IMR-90 (cell line): ENCODE measurements at regions of chr1 and their contacts with region 1.

Region 1: GRCh38 chr1:55284852-55285251 is 69.7 kb upstream of the USP24 start:
- DNase-seq: peak; percentile 60
- ATAC-seq: peak; percentile 84
- H3K4me3 ChIP-seq: no peak overlapping the region
- H3K27ac ChIP-seq: no peak overlapping the region
- H3K4me1 ChIP-seq: peaks cover 3% of the 10 kb centered on the region; the same call in 1 of the 2 replicates
- H3K27me3 ChIP-seq: no peaks in the 10 kb centered on the region
- CTCF ChIP-seq: peak; percentile 78
- POLR2A ChIP-seq: no peak
- RAD21 ChIP-seq: peak; percentile 85

Region 2: DNA sequence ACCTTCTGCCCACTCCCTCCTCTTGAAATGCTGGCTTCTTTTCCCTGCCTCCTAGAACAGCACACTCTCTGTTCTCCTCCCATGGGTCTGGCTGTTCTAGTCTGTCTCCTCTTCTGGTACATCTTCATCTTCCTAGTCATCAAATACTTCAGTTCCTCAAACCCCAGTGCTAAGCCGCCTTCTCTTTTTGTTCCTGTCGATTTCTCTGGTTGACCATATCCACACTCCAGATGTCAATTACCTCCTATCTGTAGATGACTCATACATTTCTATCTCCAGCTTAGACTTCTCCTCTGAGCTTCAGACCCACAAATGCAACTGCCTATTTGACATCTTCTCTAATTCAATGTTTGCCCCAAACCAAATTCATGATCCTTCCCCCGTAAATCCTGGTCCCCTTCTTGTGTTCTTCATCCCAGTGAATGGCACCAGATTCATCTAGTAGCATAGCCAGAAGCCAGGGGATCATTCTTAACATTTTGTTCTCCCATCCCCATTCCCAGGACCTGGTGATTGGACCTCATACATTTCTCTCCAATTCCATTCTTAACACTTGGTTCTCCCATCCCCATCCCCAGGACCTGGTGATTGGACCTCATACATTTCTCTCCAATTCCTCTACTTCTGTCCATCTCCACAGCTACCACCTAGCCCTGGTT is 105.5 kb before region 1 on chr1:
- CTCF ChIA-PET with region 1: no interaction called
- POLR2A ChIA-PET with region 1: no interaction called
- dilution Hi-C with region 1: no loop called
- in situ Hi-C with region 1: no loop called
- intact Hi-C with region 1: no loop called
- DNase-seq: peak; percentile 13
- ATAC-seq: no peak
- H3K4me3 ChIP-seq: no peak overlapping the region
- H3K27ac ChIP-seq: no peak overlapping the region
- H3K4me1 ChIP-seq: no peaks in the 10 kb centered on the region
- H3K27me3 ChIP-seq: no peaks in the 10 kb centered on the region
- CTCF ChIP-seq: no peak
- POLR2A ChIP-seq: no peak
- RAD21 ChIP-seq: no peak

Region 3: DNA sequence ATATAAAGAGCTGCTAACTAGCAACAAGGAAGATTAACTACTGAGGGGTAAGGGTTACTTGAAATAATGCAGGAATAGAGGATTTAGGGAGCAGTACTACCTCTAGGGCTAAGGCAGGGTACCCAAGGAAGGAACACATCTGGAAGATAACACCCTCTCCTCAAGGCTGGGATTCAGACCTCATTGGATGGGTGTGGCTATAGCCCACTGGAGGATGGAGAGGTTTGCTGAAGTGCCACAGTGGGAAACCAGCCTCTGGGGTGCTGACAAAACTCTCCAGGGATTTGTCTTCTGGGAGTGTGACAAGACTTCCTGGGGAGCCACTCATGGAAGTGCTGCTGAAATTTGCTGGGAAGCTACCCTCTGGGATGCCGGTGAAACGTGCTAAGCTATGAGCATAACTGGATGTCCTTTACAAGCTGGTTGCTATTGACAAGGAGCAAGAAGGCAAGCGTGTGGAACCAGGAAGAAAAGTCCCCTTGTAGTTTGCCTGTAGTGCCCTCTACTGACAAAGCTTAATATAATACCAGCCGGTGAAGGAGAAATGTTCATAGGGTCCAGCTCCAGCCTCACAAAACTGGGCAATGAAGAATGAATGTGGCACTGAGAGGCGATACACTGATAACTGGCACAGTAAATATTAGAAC is 53.1 kb after region 1 on chr1:
- CTCF ChIA-PET with region 1: interaction called, 19 read pairs
- POLR2A ChIA-PET with region 1: no interaction called
- dilution Hi-C with region 1: no loop called
- in situ Hi-C with region 1: no loop called
- intact Hi-C with region 1: loop called (anchors 1 kb)
- DNase-seq: peak; percentile 79
- ATAC-seq: peak; percentile 96
- H3K4me3 ChIP-seq: no peak overlapping the region
- H3K27ac ChIP-seq: no peak overlapping the region
- H3K4me1 ChIP-seq: no peaks in the 10 kb centered on the region
- H3K27me3 ChIP-seq: no peaks in the 10 kb centered on the region
- CTCF ChIP-seq: peak; percentile 77
- POLR2A ChIP-seq: no peak
- RAD21 ChIP-seq: peak; percentile 88

Region 4: GRCh38 chr1:55506686-55507577 is 222.1 kb after region 1 on chr1:
- CTCF ChIA-PET with region 1: no interaction called
- POLR2A ChIA-PET with region 1: no interaction called
- dilution Hi-C with region 1: no loop called
- in situ Hi-C with region 1: no loop called
- intact Hi-C with region 1: loop called (anchors 2 kb)
- DNase-seq: peak; percentile 63
- ATAC-seq: peak; percentile 51
- H3K4me3 ChIP-seq: no peak overlapping the region
- H3K27ac ChIP-seq: peak overlapping the region; percentile 89
- H3K4me1 ChIP-seq: peaks cover 30% of the 10 kb centered on the region
- H3K27me3 ChIP-seq: no peaks in the 10 kb centered on the region
- CTCF ChIP-seq: peak; percentile 31; the same call in 1 of the 2 replicates
- POLR2A ChIP-seq: no peak
- RAD21 ChIP-seq: peak; percentile 37

Region 5: DNA sequence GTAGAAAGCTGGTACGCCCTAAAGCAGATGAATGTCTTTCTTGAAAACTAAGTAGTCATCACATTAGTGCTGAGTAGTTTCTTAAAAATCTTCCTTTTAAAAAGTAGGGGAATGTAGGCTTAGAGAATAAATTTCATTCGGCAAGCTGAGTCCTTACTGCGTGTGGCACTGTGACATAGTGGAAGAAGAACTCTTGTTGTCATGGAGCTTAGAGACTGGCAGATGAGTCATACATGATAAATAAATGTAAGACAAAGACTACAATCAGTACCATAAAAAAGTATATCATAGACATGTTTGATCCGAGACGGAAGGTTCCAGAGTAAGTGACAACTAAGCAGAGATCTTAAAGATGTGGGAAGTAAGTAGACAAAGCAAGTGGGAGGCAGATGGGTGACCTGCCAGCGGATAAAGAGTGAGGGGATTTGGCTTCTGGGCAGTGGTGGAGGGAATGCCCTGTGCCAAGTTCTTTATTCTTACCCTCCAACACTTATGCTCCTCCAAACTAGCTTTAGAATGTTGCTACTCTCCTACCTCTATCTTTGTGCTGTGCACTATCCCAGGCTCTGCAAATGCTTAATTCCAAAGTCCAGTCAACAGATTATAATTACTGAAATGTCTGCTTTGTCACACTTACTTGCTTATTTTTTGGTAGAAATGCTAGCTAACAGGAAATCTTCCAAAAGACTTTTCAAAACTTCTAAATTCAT is 538.8 kb after region 1 on chr1:
- CTCF ChIA-PET with region 1: no interaction called
- POLR2A ChIA-PET with region 1: no interaction called
- dilution Hi-C with region 1: no loop called
- in situ Hi-C with region 1: no loop called
- intact Hi-C with region 1: no loop called
- DNase-seq: peak; percentile 64
- ATAC-seq: 0 out of 2 replicates have a peak, but pooled peaks have one; percentile 18
- H3K4me3 ChIP-seq: no peak overlapping the region
- H3K27ac ChIP-seq: peak overlapping the region; percentile 48; the same call in 1 of the 2 replicates
- H3K4me1 ChIP-seq: peaks cover 23% of the 10 kb centered on the region
- H3K27me3 ChIP-seq: no peaks in the 10 kb centered on the region
- CTCF ChIP-seq: 0 out of 2 replicates have a peak, but pooled peaks have one; percentile 5
- POLR2A ChIP-seq: no peak
- RAD21 ChIP-seq: no peak; the same call in 1 of the 2 replicates

Region 6: DNA sequence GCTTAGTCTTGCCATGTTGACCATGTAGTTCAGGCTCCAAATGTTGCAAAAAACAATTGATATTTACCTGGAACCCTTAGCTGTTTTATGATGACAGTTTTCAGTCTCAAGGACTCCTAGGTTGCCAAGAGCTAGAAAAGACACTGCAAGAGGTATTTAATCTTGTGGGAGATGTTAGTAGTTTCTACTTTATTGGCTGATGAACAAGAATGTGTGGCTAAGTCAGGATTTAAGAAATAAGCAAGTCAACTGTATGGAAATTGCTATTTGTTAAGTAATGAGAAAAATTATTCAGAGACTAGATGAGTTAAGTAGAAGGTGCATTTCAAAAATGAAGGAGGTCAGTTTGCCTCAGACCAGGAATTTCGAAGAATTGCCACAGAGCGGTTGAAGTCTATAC is 570.1 kb after region 1 on chr1:
- CTCF ChIA-PET with region 1: no interaction called
- POLR2A ChIA-PET with region 1: no interaction called
- dilution Hi-C with region 1: no loop called
- in situ Hi-C with region 1: no loop called
- intact Hi-C with region 1: loop called (anchors 10 kb)
- DNase-seq: peak; percentile 54
- ATAC-seq: peak; percentile 79
- H3K4me3 ChIP-seq: no peak overlapping the region
- H3K27ac ChIP-seq: peak overlapping the region; percentile 71; the same call in 1 of the 2 replicates
- H3K4me1 ChIP-seq: peaks cover 9% of the 10 kb centered on the region
- H3K27me3 ChIP-seq: no peaks in the 10 kb centered on the region
- CTCF ChIP-seq: no peak
- POLR2A ChIP-seq: no peak
- RAD21 ChIP-seq: no peak

Region 7: DNA sequence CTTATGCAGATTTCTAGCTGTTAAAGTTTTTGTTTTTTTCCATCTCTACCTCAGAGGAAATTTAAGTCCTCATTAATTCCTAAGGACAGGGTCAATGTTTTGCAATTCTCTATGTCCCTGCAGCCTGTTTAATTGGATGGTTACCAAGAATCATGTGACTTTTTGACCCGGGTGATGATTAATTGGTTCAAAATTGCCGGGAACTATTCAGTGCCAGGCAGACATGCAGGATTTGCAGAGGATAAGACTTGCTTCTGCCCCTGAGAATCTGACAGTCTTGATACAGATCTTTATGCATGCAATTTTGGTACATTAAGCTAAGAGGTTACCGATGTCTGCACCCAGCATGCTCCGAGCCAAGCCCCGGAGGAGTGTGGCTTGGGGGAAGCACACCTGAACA is 1206.6 kb after region 1 on chr1:
- CTCF ChIA-PET with region 1: no interaction called
- POLR2A ChIA-PET with region 1: no interaction called
- dilution Hi-C with region 1: no loop called
- in situ Hi-C with region 1: loop called (anchors 10 kb)
- intact Hi-C with region 1: loop called (anchors 10 kb)
- DNase-seq: peak; percentile 24
- ATAC-seq: peak; percentile 15; the same call in 1 of the 2 replicates
- H3K4me3 ChIP-seq: no peak overlapping the region
- H3K27ac ChIP-seq: no peak overlapping the region
- H3K4me1 ChIP-seq: no peaks in the 10 kb centered on the region; the same call in 1 of the 2 replicates
- H3K27me3 ChIP-seq: no peaks in the 10 kb centered on the region
- CTCF ChIP-seq: no peak
- POLR2A ChIP-seq: no peak
- RAD21 ChIP-seq: no peak

Region 8: GRCh38 chr1:56709269-56709880 is 1424.5 kb after region 1 on chr1:
- CTCF ChIA-PET with region 1: interaction called, 6 read pairs
- POLR2A ChIA-PET with region 1: no interaction called
- dilution Hi-C with region 1: no loop called
- in situ Hi-C with region 1: loop called (anchors 10 kb)
- intact Hi-C with region 1: loop called (anchors 2 kb)
- DNase-seq: peak; percentile 65
- ATAC-seq: peak; percentile 67
- H3K4me3 ChIP-seq: no peak overlapping the region
- H3K27ac ChIP-seq: no peak overlapping the region
- H3K4me1 ChIP-seq: peaks cover 2% of the 10 kb centered on the region; the same call in 1 of the 2 replicates
- H3K27me3 ChIP-seq: no peaks in the 10 kb centered on the region
- CTCF ChIP-seq: peak; percentile 56
- POLR2A ChIP-seq: no peak
- RAD21 ChIP-seq: peak; percentile 59